PC-9 (cell line): ENCODE measurements at regions of chr2 and their contacts with region 1.

Region 1: DNA sequence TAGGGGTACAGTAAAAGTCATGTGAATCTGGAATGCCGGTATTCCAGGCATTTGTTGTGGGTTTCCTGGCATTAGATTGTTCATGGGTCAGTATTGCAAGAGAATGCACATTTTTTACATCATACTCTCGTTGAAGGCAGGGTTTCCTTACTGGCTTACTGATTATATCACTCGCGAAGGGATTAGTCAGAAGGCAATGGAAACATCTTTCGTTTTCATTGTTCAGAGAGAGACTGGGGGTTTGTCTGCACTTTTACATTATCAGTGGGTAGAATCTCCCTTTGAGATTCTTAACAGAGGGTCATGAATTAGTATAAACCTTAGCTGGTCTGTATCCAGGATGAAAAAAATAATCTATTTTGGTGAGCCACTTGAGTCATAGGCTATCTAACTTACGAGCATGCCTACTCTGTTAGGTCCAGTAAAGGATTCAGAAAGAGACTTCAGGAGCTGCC is 229.3 kb upstream of the EPAS1 start:
- DNase-seq: peak; percentile 60 to 98
- H3K4me3 ChIP-seq: peak overlapping the region; percentile 27
- H3K27ac ChIP-seq: peak overlapping the region; percentile 89
- H3K4me1 ChIP-seq: peaks cover 80% of the 10 kb centered on the region
- H3K27me3 ChIP-seq: no peaks in the 10 kb centered on the region
- CTCF ChIP-seq: no peak

Region 2: GRCh38 chr2:46020416-46020815 is 47.5 kb before region 1 on chr2:
- CTCF ChIA-PET with region 1: no interaction called
- POLR2A ChIA-PET with region 1: no interaction called
- intact Hi-C with region 1: no loop called
- DNase-seq: no peak
- H3K4me3 ChIP-seq: no peak overlapping the region
- H3K27ac ChIP-seq: no peak overlapping the region
- H3K4me1 ChIP-seq: no peaks in the 10 kb centered on the region
- H3K27me3 ChIP-seq: no peaks in the 10 kb centered on the region
- CTCF ChIP-seq: no peak

Region 3: DNA sequence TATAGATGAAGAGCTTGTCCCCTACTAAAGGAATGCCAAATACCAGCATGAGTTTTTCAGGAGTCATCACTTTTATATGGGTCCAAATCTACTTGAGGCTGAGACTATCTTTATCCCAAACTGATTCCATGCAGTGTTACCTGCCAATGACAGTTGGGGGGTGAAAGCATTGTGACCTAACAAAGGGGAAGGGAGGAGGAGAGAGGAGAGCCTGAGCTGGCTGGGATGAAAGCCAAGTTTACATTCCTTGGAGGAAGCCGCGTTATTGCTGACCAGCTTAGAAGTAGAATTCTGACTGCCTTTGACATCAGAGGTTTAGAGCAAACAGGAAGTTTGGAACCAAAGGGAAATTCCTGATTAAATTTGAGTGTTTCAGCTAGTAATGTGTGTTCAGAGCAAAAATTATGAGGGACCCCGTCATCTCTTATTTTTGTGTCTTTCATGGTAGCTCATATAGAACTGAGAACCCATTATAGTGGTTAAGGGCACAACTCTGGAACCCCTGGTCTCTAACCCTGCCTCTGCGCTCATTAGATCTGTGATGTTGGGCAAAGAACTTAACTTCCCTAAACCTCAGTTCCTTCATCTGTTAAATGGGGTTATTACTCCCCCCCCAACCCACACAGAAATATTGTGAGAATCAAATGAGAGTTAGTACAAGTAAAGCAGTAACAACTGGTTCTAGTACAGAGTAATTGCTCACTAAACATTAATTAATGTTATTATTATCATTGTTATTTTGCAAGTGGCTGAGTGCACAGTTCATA is 30.0 kb after region 1 on chr2:
- CTCF ChIA-PET with region 1: interaction called, 10 read pairs
- POLR2A ChIA-PET with region 1: no interaction called
- intact Hi-C with region 1: loop called (anchors 1 kb)
- DNase-seq: peak; percentile 79 to 95
- H3K4me3 ChIP-seq: 0 out of 2 replicates have a peak overlapping the region, but pooled peaks have one; percentile 7
- H3K27ac ChIP-seq: peak overlapping the region; percentile 93
- H3K4me1 ChIP-seq: peaks cover 26% of the 10 kb centered on the region
- H3K27me3 ChIP-seq: no peaks in the 10 kb centered on the region
- CTCF ChIP-seq: no peak

Region 4: GRCh38 chr2:46117379-46117778 is 49.5 kb after region 1 on chr2:
- CTCF ChIA-PET with region 1: interaction called, 16 read pairs
- POLR2A ChIA-PET with region 1: no interaction called
- intact Hi-C with region 1: loop called (anchors 2 kb)
- DNase-seq: peak; percentile 38 to 75
- H3K4me3 ChIP-seq: no peak overlapping the region
- H3K27ac ChIP-seq: peak overlapping the region; percentile 67
- H3K4me1 ChIP-seq: peaks cover 49% of the 10 kb centered on the region
- H3K27me3 ChIP-seq: no peaks in the 10 kb centered on the region
- CTCF ChIP-seq: no peak

Region 5: GRCh38 chr2:46171996-46172546 is 104.2 kb after region 1 on chr2:
- CTCF ChIA-PET with region 1: interaction called, 5 read pairs
- POLR2A ChIA-PET with region 1: interaction called, 3 read pairs
- intact Hi-C with region 1: loop called (anchors 1 kb)
- DNase-seq: peak; percentile 67 to 75
- H3K4me3 ChIP-seq: no peak overlapping the region
- H3K27ac ChIP-seq: peak overlapping the region; percentile 16; the same call in 1 of the 2 replicates
- H3K4me1 ChIP-seq: peaks cover 70% of the 10 kb centered on the region
- H3K27me3 ChIP-seq: no peaks in the 10 kb centered on the region
- CTCF ChIP-seq: peak; percentile 33

Region 6: DNA sequence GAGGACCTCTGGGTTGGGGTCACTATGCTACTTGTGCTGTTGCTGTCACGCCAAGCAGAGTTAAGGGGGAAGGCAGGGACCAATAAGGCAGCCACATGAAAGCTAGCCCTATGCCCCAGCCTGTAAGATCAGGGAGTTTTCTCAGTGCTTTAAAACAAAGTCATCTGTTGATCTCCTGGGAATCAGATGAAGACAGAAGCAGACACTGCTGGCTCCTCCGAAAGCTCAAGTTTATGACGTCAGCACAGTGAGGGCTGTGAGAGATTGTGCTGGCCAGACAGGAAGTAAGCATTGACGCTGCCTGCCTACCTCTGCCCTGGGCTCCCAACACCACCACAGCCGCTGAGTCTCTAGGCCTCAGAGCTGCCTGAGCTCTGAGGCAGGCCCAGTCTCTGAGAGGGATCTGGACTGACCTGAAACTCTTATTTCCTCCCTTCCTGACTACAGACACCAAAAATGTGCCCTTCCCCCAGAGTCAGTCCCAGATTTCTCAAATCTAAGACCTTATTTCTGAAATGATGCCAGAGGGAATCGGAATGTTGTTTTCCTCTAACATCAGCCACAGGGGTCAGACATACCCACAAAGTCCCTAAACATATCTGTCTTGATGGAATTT is 111.3 kb after region 1 on chr2:
- CTCF ChIA-PET with region 1: interaction called, 5 read pairs
- POLR2A ChIA-PET with region 1: no interaction called
- intact Hi-C with region 1: loop called (anchors 1 kb)
- DNase-seq: peak; percentile 82 to 99
- H3K4me3 ChIP-seq: no peak overlapping the region; the same call in 1 of the 2 replicates
- H3K27ac ChIP-seq: peak overlapping the region; percentile 94
- H3K4me1 ChIP-seq: peaks cover 58% of the 10 kb centered on the region
- H3K27me3 ChIP-seq: no peaks in the 10 kb centered on the region
- CTCF ChIP-seq: no peak; the same call in 1 of the 2 replicates

Region 7: DNA sequence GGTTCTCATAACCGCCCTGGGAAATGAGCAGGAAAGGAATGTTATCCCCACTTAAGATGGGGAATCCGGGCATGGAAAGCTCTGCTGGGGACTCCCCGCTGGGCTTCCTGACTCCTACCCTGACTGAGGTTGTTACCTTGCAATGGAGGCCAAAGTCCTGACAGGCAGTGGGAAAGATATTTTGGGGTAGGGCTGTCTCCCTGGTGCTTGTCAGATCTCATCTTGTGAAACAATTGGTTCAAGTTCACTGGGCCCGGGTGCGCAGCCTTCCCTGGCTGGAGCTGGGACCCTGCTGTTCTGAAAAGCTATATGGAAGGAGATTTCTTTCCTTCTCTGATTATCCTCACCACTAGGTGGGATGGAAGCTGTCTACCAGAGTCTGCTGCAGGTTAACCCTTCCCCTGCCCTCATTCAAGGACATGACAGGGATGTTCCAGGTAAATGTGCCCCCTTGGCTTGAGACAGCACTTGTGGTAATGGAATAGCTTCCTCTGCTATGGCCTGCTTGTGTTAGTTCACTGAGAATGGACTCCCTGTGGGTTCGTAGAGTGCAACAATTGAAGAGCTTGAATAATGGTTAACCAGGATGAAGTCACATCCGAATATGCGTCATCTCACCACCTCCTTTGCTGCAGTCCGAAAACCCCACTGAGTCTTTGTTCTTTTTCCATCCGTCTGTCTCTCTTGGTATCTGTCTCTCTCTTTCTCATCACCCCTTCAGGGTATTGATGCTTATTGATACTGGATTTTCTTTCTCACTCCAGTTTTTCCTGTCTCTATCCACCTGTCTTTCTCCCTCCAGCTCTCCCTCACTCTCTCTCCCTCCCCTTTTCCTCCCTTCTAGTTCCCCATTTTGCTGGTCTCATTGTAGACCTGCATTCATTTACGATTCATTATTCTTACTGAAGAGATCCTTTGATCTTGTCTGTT is 161.5 kb after region 1 on chr2:
- CTCF ChIA-PET with region 1: interaction called, 4 read pairs
- POLR2A ChIA-PET with region 1: interaction called, 3 read pairs
- intact Hi-C with region 1: loop called (anchors 2 kb)
- DNase-seq: no peak
- H3K4me3 ChIP-seq: no peak overlapping the region
- H3K27ac ChIP-seq: no peak overlapping the region
- H3K4me1 ChIP-seq: peaks cover 33% of the 10 kb centered on the region
- H3K27me3 ChIP-seq: no peaks in the 10 kb centered on the region
- CTCF ChIP-seq: no peak

Region 8: GRCh38 chr2:46857893-46858701 is 790.2 kb after region 1 on chr2:
- CTCF ChIA-PET with region 1: no interaction called
- POLR2A ChIA-PET with region 1: no interaction called
- intact Hi-C with region 1: loop called (anchors 5 kb)
- DNase-seq: peak; percentile 41 to 62
- H3K4me3 ChIP-seq: no peak overlapping the region
- H3K27ac ChIP-seq: peak overlapping the region; percentile 91
- H3K4me1 ChIP-seq: peaks cover 59% of the 10 kb centered on the region
- H3K27me3 ChIP-seq: no peaks in the 10 kb centered on the region
- CTCF ChIP-seq: no peak